ENCODE measurements at regions of chr21 and their contacts with region 1.

Region 1: DNA sequence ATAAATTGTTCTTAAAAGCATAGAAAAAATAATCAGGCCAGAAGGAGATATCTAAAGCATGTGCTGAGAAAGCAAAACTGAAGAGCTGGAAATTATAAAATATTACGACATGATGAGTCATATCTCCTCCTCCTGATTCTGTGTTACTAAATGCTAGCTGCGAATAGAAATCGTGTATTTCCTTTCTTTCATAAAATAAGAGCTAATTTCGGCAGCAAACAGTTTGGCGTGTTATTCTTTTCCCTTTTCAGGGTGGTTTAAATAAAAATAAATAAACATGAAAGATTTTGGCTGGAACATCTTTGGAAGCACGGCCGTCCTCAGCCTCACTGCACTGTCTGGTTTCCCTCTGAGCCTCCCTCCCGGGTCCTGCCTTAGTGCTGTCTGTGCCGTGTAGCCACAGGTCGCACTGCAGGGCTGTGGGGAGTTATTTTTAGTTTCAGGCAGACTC is 56.0 kb downstream of the ADARB1 start:
- DNase-seq: peak; percentile 72
- H3K4me3 ChIP-seq: peak overlapping the region; percentile 9 to 56 (median 12)
- H3K27ac ChIP-seq: peak overlapping the region; percentile 83
- H3K4me1 ChIP-seq: peaks cover 45% of the 10 kb centered on the region
- H3K27me3 ChIP-seq: no peaks in the 10 kb centered on the region
- CTCF ChIP-seq: no peak
- POLR2A ChIP-seq: no peak

Region 2: DNA sequence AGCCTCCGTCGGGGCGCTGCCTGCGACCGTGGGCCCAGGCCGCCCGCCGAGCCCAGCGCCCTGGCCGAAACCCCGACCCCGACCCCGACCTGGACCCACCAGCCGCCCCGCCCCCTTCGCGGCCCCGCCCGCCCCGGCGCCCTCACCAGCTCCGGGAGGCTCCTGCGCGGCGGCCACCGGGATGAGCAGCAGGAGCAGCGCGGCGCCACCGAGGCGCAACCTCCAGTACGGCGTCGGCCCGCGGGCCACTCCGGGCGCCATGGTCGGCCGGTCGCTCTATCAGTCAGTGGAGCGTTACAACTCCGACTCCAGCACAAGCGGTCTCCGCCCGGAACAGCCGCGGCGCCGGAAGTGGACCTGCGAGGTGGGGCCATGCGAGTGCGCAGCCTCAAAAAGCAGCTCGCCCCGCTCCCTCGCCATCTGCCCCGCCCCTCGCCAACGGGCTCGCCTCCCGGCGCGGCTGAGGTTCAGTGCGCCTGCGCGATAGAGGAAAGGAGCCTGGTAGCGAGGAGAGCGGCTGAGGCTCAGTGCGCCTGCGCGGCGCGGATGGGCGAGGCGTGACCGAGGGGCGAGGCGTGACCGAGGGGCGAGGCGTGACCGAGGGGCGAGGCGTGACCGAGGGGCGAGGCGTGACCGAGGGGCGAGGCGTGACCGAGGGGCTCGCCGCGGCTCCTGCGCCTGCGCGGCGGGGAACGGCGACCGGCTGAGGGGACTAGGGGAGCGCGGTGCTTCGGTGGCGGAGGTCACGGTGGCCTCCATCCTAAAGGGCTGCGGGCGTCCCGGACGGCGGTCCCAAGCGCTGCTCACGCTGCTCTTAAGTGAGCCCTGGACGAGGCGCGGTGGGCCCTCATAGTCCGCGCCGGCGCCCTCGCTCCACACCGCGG is 256.8 kb before region 1 on chr21 and contains the start of gene PTTG1IP:
- CTCF ChIA-PET with region 1: no interaction called
- POLR2A ChIA-PET with region 1: no interaction called
- dilution Hi-C with region 1: no loop called
- intact Hi-C with region 1: loop called (anchors 5 kb)
- DNase-seq: peak; percentile 99
- H3K4me3 ChIP-seq: peak within 1 kb of the TSS; percentile 83 to 96 (median 91)
- H3K27ac ChIP-seq: peak within 1 kb of the TSS; percentile 97
- H3K4me1 ChIP-seq: peaks cover 59% of the 10 kb centered on the region
- H3K27me3 ChIP-seq: no peaks in the 10 kb centered on the region
- CTCF ChIP-seq: no peak
- POLR2A ChIP-seq: peak; percentile 58
- total RNA-seq, gene PTTG1IP: 406 and 415 TPM in 2 replicates

Region 3: GRCh38 chr21:44901391-44902074 is 228.8 kb before region 1 on chr21:
- CTCF ChIA-PET with region 1: no interaction called
- POLR2A ChIA-PET with region 1: no interaction called
- dilution Hi-C with region 1: no loop called
- intact Hi-C with region 1: no loop called
- DNase-seq: no peak
- H3K4me3 ChIP-seq: no peak overlapping the region
- H3K27ac ChIP-seq: no peak overlapping the region
- H3K4me1 ChIP-seq: no peaks in the 10 kb centered on the region
- H3K27me3 ChIP-seq: no peaks in the 10 kb centered on the region
- CTCF ChIP-seq: no peak
- POLR2A ChIP-seq: no peak

Region 4: GRCh38 chr21:44949779-44950198 is 180.6 kb before region 1 on chr21:
- CTCF ChIA-PET with region 1: interaction called, 330 read pairs
- POLR2A ChIA-PET with region 1: interaction called, 6 read pairs
- dilution Hi-C with region 1: loop called (anchors 25 kb)
- intact Hi-C with region 1: loop called (anchors 1 kb)
- DNase-seq: peak; percentile 54
- H3K4me3 ChIP-seq: no peak overlapping the region
- H3K27ac ChIP-seq: no peak overlapping the region
- H3K4me1 ChIP-seq: peaks cover 3% of the 10 kb centered on the region
- H3K27me3 ChIP-seq: no peaks in the 10 kb centered on the region
- CTCF ChIP-seq: peak; percentile 88 to 89
- POLR2A ChIP-seq: no peak

Region 5: GRCh38 chr21:44969931-44970755 is 160.2 kb before region 1 on chr21:
- CTCF ChIA-PET with region 1: interaction called, 52 read pairs
- POLR2A ChIA-PET with region 1: no interaction called
- dilution Hi-C with region 1: no loop called
- intact Hi-C with region 1: no loop called
- DNase-seq: peak; percentile 8
- H3K4me3 ChIP-seq: no peak overlapping the region
- H3K27ac ChIP-seq: peak overlapping the region; percentile 10
- H3K4me1 ChIP-seq: peaks cover 12% of the 10 kb centered on the region
- H3K27me3 ChIP-seq: no peaks in the 10 kb centered on the region
- CTCF ChIP-seq: no peak
- POLR2A ChIP-seq: no peak

Region 6: GRCh38 chr21:44982558-44983244 is 147.6 kb before region 1 on chr21:
- CTCF ChIA-PET with region 1: interaction called, 11 read pairs
- POLR2A ChIA-PET with region 1: no interaction called
- dilution Hi-C with region 1: no loop called
- intact Hi-C with region 1: no loop called
- DNase-seq: peak; percentile 74
- H3K4me3 ChIP-seq: no peak overlapping the region
- H3K27ac ChIP-seq: peak overlapping the region; percentile 51
- H3K4me1 ChIP-seq: peaks cover 12% of the 10 kb centered on the region
- H3K27me3 ChIP-seq: no peaks in the 10 kb centered on the region
- CTCF ChIP-seq: no peak
- POLR2A ChIP-seq: no peak

Region 7: DNA sequence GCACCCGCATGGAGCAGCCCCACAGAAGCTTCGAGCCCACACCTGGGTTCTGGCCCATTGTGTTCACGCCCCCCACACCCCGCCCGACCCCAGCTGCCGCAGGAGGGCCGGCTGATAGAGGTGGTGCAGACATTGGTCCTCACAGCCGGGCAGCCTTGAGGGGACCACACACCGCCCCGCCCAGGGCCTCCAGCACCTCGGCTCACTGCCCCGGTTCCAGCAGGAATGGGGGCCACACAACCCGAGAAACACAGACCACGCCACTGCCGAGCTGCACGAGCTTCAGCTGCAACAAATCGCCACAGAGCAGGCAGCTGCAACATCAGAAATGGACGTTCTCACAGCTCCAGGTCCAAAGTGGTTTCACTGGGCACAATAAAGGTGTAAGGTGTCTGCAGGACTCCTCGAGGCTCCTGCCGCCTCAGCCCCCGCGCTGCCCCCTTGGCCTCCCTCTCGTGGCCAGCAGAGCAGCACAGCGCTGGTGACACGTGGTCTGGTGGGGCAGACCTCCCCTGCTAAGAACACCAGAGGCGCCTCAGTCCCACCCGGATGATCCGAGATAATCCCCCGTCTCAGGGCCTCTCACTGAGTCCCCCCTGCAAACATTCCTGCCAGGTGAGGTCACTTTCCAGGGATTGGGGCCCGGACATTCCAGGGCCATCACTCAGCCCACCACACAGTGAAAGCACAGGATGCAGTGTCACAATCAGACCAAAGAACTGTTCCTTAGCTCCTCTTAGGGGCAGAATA is 118.3 kb before region 1 on chr21:
- CTCF ChIA-PET with region 1: interaction called, 21 read pairs
- POLR2A ChIA-PET with region 1: interaction called, 7 read pairs
- dilution Hi-C with region 1: no loop called
- intact Hi-C with region 1: loop called (anchors 1 kb)
- DNase-seq: peak; percentile 78
- H3K4me3 ChIP-seq: no peak overlapping the region
- H3K27ac ChIP-seq: peak overlapping the region; percentile 77
- H3K4me1 ChIP-seq: peaks cover 22% of the 10 kb centered on the region
- H3K27me3 ChIP-seq: no peaks in the 10 kb centered on the region
- CTCF ChIP-seq: peak; percentile 28 to 50
- POLR2A ChIP-seq: no peak

Region 8: DNA sequence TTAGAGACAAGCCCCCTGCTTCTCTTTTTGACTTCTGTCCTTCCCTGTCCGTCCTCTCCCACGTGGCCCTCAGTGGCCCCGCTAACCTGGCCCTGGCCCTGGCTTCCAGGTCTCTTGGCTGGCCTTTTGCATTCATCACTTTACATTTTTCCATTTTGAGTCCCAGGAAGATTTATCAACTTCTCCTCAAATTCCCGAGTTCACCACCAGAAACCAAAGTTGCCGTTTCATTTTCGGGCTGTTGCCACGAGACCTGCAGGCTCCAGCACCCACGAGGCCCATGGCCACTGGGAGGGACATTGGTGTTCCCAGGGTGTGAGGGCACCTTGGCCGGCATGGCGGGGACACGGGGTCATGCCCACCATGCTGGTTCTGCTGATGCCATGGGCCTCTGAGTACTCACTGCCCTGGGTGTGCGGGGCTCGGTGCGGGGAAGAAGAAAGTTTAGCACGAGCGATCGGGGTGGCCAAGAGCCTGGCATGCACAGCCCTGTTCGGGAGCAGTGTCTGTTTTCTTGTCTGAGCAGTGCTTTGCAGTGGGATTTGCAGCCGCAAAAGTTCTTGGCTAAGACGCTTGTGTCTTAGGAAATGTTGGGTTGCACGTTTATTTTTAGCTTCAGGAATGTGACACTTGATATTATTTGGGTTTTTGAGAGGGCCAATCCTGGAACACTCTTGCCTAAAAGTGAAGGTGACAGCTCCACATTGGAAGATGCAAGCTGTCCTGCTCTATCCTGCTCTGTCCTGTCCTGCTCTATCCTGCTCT is 96.4 kb before region 1 on chr21:
- CTCF ChIA-PET with region 1: no interaction called
- POLR2A ChIA-PET with region 1: no interaction called
- dilution Hi-C with region 1: no loop called
- intact Hi-C with region 1: no loop called
- DNase-seq: no peak
- H3K4me3 ChIP-seq: no peak overlapping the region
- H3K27ac ChIP-seq: no peak overlapping the region
- H3K4me1 ChIP-seq: no peaks in the 10 kb centered on the region
- H3K27me3 ChIP-seq: no peaks in the 10 kb centered on the region
- CTCF ChIP-seq: no peak
- POLR2A ChIP-seq: no peak

Region 9: DNA sequence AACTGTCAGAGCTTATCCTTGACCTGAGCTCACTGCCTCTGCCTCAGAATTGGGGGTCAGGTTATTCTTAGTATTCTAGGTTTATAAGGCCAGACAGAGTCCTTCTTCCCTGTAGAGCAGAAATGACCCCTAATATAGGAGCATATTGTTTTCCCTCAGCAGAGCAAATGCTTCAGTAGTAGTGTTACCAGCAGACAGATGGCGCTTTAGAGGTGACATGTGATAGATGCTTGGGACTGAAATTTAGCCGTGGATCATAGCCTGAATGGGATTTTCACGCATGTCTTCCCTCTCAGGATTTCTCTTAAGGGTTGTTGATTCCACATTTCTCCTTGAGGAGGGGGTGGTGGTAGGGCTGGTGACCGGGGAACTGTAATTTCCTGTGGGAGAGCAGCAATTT is 31.5 kb before region 1 on chr21:
- CTCF ChIA-PET with region 1: interaction called, 269 read pairs
- POLR2A ChIA-PET with region 1: interaction called, 4 read pairs
- dilution Hi-C with region 1: no loop called
- intact Hi-C with region 1: loop called (anchors 1 kb)
- DNase-seq: peak; percentile 46
- H3K4me3 ChIP-seq: no peak overlapping the region
- H3K27ac ChIP-seq: no peak overlapping the region
- H3K4me1 ChIP-seq: peaks cover 65% of the 10 kb centered on the region
- H3K27me3 ChIP-seq: no peaks in the 10 kb centered on the region
- CTCF ChIP-seq: peak; percentile 36 to 53
- POLR2A ChIP-seq: no peak

Region 10: DNA sequence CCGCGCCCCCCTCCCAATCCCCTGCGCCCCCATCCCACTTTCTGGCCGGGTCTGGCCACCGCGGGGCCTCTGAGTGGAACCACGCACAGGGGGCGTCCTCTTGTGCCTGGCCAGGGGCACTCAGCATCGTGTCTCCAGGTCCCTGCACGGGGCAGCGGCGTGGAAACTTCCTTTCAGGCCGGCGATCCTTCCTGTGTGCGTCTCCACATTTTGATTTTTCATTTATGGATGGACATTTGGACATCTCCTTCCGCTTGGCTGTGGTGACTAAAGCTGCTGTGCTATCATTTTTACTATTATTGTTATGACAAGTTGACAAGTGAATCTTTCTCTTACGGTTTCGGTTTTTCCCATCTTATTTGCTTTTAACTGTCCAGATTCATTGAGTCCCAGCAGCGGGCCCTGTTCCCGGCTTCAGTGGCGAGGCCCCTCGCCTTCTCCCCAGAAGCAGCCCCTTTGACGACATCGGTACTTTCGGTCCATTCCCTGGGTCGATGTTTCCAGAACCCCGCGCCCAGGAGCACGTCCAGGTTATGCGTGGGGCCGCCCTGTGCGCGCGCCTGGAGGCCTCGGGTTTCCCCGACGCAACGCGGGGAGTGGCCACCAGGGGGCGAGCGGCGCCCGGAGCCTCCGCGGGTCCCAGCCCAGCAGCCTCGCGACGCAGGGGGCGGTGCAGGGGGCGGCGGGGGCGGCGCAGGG is 424.3 kb after region 1 on chr21:
- CTCF ChIA-PET with region 1: no interaction called
- POLR2A ChIA-PET with region 1: no interaction called
- dilution Hi-C with region 1: no loop called
- intact Hi-C with region 1: no loop called
- DNase-seq: peak; percentile 75
- H3K4me3 ChIP-seq: peak overlapping the region; percentile 48 to 74 (median 70)
- H3K27ac ChIP-seq: peak overlapping the region; percentile 39
- H3K4me1 ChIP-seq: peaks cover 28% of the 10 kb centered on the region
- H3K27me3 ChIP-seq: peaks cover 0 to 5% of the 10 kb centered on the region in 2 experiments
- CTCF ChIP-seq: peak; percentile 70 to 85
- POLR2A ChIP-seq: peak; percentile 20

Region 11: DNA sequence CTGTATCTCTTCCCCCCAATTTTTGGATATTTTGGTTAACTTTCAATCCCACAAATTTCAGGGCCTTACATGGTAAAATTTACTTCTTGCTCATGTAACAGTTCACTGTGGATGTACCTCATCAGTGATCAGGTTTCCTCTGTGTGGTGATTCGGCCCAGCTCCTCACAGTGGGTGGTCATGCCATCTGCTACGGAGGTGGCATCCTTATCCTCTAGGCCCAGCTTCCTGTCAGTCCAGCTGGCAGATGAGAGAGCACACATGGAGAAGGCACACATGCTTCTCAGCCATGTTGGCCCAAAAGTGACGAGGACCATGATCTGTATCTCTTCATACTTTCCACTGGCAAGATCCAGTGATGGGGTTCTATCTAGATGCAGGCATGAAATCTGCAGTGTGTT is 540.4 kb after region 1 on chr21:
- CTCF ChIA-PET with region 1: no interaction called
- POLR2A ChIA-PET with region 1: no interaction called
- dilution Hi-C with region 1: no loop called
- intact Hi-C with region 1: no loop called
- DNase-seq: no peak
- H3K4me3 ChIP-seq: no peak overlapping the region
- H3K27ac ChIP-seq: no peak overlapping the region
- H3K4me1 ChIP-seq: no peaks in the 10 kb centered on the region
- H3K27me3 ChIP-seq: peaks cover 0 to 3% of the 10 kb centered on the region in 2 experiments
- CTCF ChIP-seq: no peak
- POLR2A ChIP-seq: no peak

Measured in endothelial cell of umbilical vein (primary cell).